Stomach (tissue), 19 donors: ENCODE measurements at regions of chr3 and their contacts with region 1.

Region 1: GRCh38 chr3:118884748-118885206 is 149.9 kb downstream of the IGSF11 start:
- DNase-seq: peak; percentile 79 to 86
- H3K4me3 ChIP-seq: no peak overlapping the region
- H3K27ac ChIP-seq: no peak overlapping the region
- H3K4me1 ChIP-seq: no peaks in the 10 kb centered on the region
- H3K27me3 ChIP-seq: peaks cover 0 to 31% (median 0%) of the 10 kb centered on the region in 3 donors
- CTCF ChIP-seq: peak in 5 of 7 experiments; percentile 72 to 76 (median 72)
- EP300 ChIP-seq: no peak
- POLR2A ChIP-seq: no peak

Region 2: DNA sequence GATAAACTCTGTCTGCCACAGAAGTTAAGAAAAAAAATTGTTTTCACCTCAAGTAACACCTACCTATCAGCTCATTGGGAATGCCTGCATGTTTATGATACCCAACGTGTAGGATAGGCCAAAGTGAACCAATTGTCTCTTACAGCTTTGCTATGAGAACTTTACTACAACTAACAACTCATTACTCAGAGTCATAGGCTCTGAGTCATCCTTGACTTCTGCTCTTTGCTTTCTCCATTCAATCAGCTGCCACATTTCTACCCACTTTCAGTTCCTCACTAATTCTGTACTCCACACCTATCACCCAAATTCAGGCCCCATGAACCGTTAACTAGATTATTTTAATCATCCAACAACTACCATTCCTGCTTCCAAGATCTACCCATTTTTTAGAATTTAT is 1331.3 kb before region 1 on chr3:
- intact Hi-C with region 1: no loop called
- DNase-seq: peak in 1 of 2 donors; percentile 12
- H3K4me3 ChIP-seq: no peak overlapping the region
- H3K27ac ChIP-seq: no peak overlapping the region
- H3K4me1 ChIP-seq: no peaks in the 10 kb centered on the region
- H3K27me3 ChIP-seq: no peaks in the 10 kb centered on the region
- CTCF ChIP-seq: no peak
- EP300 ChIP-seq: no peak
- POLR2A ChIP-seq: no peak

Region 3: GRCh38 chr3:119098619-119099222 is 213.9 kb after region 1 on chr3:
- intact Hi-C with region 1: loop called (anchors 5 kb)
- DNase-seq: peak in 1 of 2 donors; percentile 74
- H3K4me3 ChIP-seq: no peak overlapping the region
- H3K27ac ChIP-seq: no peak overlapping the region
- H3K4me1 ChIP-seq: no peaks in the 10 kb centered on the region
- H3K27me3 ChIP-seq: no peaks in the 10 kb centered on the region
- CTCF ChIP-seq: peak in 5 of 7 experiments; percentile 32 to 56 (median 45)
- EP300 ChIP-seq: no peak
- POLR2A ChIP-seq: no peak

Region 4: DNA sequence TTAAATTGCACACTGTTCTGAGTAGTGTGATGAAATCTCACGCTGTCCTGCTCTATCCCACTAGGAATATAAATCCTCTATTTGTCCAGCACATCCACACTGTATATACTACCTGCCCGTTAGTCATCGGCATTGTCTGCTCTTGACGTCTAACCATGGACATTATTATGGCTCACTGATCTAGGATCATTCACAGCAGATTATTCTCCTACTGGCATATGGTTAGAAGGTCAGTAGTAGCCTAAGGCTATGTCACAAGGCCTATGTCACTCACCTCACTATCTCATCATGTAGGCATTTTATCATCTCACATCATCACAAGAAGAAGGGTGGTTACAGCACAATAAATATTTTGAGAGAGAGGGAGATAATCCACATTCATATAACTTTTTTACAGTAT is 1088.5 kb after region 1 on chr3:
- intact Hi-C with region 1: no loop called
- DNase-seq: no peak
- H3K4me3 ChIP-seq: no peak overlapping the region
- H3K27ac ChIP-seq: no peak overlapping the region
- H3K4me1 ChIP-seq: peaks cover 0 to 5% (median 0%) of the 10 kb centered on the region in 4 donors
- H3K27me3 ChIP-seq: no peaks in the 10 kb centered on the region
- CTCF ChIP-seq: no peak
- EP300 ChIP-seq: no peak
- POLR2A ChIP-seq: no peak